OCI-LY7 (cell line): ENCODE measurements at regions of chr17 and their contacts with region 1.

Region 1: DNA sequence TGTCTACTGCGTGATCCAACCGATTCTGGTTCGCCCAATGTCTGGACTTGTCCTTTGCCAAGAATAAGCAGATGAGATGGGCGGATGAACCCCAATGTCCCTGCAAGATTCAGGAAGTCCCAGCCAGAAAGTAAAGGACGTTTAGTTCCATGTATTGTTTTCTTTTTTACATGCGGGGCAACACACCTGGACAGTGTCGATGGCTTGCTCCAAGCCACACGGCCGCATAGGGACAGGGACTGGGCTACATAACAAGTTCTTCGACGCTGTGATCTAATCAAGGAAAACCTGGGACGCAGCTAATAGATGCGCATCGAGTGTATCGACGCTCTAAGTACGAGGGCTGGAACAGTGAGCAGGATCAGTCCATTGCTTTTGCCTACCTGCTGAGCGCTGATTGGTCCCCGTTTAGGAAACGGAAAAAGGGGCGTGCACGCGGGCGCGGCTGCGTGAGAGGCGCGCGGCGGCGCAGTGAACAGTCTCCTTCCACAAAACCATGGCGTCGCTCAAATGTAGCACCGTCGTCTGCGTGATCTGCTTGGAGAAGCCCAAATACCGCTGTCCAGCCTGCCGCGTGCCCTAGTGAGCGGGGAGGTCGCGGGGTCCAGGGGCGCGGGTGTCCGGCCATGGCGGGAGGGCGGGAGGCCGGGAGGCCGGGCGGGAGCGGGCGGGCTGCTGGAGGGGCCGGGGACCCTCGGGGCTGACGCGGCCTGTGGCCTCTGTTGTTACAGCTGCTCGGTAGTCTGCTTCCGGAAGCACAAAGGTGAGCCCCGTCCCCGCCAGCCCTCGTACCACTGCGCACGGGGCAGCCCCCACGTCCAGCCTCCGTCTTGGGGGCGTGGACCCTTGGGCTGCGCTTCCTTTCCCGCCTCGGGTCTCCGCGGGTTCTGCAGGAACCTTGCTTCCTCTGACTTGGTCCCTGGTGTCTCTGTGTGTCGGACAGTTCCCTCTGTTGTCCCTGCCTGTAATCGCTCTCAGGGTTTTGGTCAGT is at the start of gene ZNHIT3:
- DNase-seq: peak; percentile 94
- H3K4me3 ChIP-seq: peak within 1 kb of the TSS; percentile 94
- H3K27ac ChIP-seq: peak within 1 kb of the TSS; percentile 71
- H3K4me1 ChIP-seq: peaks cover 17% of the 10 kb centered on the region
- CTCF ChIP-seq: no peak
- total RNA-seq, gene ZNHIT3: 40.4 and 42.2 TPM in 2 replicates

Region 2: DNA sequence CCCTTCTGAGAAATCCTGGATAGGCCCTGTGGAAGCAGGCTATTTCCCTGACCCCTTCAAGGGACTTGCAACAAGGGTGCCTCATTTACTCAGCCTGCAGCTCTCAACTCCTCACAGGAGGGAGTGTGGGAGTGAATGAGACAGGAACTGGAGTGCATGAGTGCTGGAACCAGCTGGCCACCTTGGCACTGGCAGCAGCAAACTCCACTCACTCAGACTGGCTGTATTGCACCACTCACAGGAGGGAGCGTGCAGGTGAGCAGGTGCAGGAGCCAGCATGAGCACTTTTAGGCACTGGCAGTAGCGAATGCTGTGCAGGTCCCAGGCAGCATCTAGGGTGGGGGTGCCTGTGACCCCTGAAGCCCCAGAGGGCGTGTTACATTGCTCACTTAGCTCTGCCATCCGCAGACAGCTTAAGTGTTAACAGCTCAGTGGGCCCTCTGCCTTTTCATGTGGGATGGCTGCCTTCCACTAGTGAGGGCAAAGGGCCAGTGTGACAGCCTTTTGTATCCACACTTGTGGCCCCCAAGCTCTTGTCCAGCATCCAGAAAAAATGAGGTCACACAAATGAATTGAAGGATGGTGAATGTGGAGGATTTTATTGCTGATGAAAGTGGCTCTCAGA is 11.0 kb before region 1 on chr17:
- CTCF ChIA-PET with region 1: no interaction called
- POLR2A ChIA-PET with region 1: no interaction called
- intact Hi-C with region 1: no loop called
- DNase-seq: no peak
- H3K4me3 ChIP-seq: no peak overlapping the region
- H3K27ac ChIP-seq: no peak overlapping the region
- H3K4me1 ChIP-seq: peaks cover 8% of the 10 kb centered on the region
- CTCF ChIP-seq: no peak

Region 3: GRCh38 chr17:36534840-36535668 is 48.6 kb after region 1 on chr17 and contains the starts of genes MYO19 and PIGW:
- CTCF ChIA-PET with region 1: no interaction called
- POLR2A ChIA-PET with region 1: interaction called, 3 read pairs
- intact Hi-C with region 1: loop called (anchors 5 kb)
- DNase-seq: peak; percentile 94
- H3K4me3 ChIP-seq: peak within 1 kb of the TSS; percentile 78
- H3K27ac ChIP-seq: peak within 1 kb of the TSS; percentile 91
- H3K4me1 ChIP-seq: peaks cover 32% of the 10 kb centered on the region
- CTCF ChIP-seq: peak; percentile 39; the same call in 1 of the 2 replicates
- total RNA-seq, gene MYO19: 109 and 124 TPM in 2 replicates
- total RNA-seq, gene PIGW: 4.6 and 5.6 TPM in 2 replicates